ENCODE measurements at regions of chr4 and their contacts with region 1.

Region 1: DNA sequence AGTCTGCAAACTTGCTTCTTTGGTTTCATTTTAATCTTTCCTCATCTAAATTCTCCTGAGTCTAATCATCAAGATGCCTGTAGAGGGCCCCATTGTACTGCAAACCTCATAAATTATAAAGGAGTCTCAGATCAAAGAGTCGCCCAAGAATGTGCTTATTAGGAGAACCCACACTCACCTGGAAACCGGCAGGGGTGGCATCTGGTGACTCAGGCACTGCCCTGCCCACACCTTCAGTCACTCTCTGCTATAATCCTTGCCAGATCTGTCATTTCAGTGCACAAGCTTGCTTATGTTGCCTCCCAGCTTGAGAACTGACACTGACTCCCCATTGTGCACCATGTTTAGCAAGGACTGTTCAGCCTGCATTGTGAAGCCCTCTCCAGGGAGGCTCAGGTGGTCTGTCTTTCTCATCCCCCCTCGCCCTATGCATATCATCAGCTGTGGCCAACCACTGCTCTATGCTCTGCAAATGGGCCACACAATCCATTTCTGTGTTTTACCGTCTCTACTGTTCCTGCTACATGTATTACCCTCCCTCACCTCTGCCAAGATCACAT is 12.4 kb downstream of the EPGN start:
- DNase-seq: peak; percentile 90
- H3K4me3 ChIP-seq: no peak overlapping the region
- H3K27ac ChIP-seq: peak overlapping the region; percentile 20
- H3K4me1 ChIP-seq: peaks cover 15% of the 10 kb centered on the region
- H3K27me3 ChIP-seq: no peaks in the 10 kb centered on the region
- CTCF ChIP-seq: peak; percentile 50 to 66

Region 2: GRCh38 chr4:74364652-74365491 is 44.2 kb after region 1 on chr4 and contains the start of gene EREG:
- CTCF ChIA-PET with region 1: no interaction called
- dilution Hi-C with region 1: no loop called
- in situ Hi-C with region 1: no loop called
- intact Hi-C with region 1: loop called (anchors 1 kb)
- DNase-seq: peak; percentile 51
- H3K4me3 ChIP-seq: peak within 1 kb of the TSS; percentile 65 to 91 (median 81)
- H3K27ac ChIP-seq: peak within 1 kb of the TSS; percentile 83
- H3K4me1 ChIP-seq: peaks cover 10% of the 10 kb centered on the region
- H3K27me3 ChIP-seq: no peaks in the 10 kb centered on the region
- CTCF ChIP-seq: no peak
- total RNA-seq, gene EREG: 9.5 to 44.0 TPM

Region 3: DNA sequence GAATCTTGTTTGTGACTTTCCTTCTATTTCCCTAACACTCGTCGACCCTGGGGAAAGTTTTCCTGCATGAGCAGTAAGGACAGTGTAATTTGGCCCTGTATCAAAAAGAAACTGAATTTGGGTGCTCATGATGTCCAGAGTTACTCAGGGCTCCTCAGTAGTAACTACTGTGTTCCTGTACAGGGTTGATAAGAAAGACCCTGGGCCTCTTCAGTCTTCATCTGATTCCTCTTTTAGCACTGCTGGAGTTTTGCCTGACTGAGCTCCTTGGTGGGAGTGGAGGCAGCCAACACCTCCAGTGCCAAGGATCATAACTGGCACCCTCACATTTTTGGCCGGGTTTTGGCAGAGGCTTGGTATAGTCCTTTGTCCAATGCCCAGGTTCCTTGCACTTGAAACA is 117.2 kb after region 1 on chr4:
- CTCF ChIA-PET with region 1: no interaction called
- dilution Hi-C with region 1: no loop called
- in situ Hi-C with region 1: no loop called
- intact Hi-C with region 1: loop called (anchors 2 kb)
- DNase-seq: no peak
- H3K4me3 ChIP-seq: no peak overlapping the region
- H3K27ac ChIP-seq: no peak overlapping the region
- H3K4me1 ChIP-seq: peaks cover 34% of the 10 kb centered on the region
- H3K27me3 ChIP-seq: no peaks in the 10 kb centered on the region
- CTCF ChIP-seq: no peak

Region 4: DNA sequence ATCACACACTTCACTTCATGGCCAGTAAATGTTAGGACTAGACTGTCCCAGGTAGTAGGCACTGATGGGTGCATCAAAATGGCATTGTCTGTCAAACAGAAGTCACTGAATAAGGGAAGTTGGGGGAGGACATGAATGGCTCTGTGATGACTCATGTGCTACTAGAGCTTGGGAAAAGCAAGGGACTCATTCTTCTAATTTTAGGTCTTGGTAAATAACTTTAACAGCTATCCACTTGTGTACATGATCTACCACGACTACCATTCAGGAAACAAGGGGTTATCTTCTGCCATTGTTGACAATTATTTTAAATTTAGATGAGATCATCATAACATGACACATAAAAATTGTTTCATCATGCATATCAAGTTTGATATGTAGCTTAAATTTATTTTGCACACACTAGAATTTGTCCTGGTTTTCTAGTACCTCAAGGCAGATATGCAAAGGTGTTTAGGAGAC is 130.6 kb after region 1 on chr4:
- CTCF ChIA-PET with region 1: no interaction called
- dilution Hi-C with region 1: no loop called
- in situ Hi-C with region 1: no loop called
- intact Hi-C with region 1: loop called (anchors 2 kb)
- DNase-seq: peak; percentile 63
- H3K4me3 ChIP-seq: peak overlapping the region; percentile 83 to 93 (median 93)
- H3K27ac ChIP-seq: peak overlapping the region; percentile 99
- H3K4me1 ChIP-seq: peaks cover 11% of the 10 kb centered on the region
- H3K27me3 ChIP-seq: no peaks in the 10 kb centered on the region
- CTCF ChIP-seq: no peak

Region 5: GRCh38 chr4:74874753-74875367 is 554.2 kb after region 1 on chr4:
- CTCF ChIA-PET with region 1: no interaction called
- dilution Hi-C with region 1: no loop called
- in situ Hi-C with region 1: no loop called
- intact Hi-C with region 1: loop called (anchors 10 kb)
- DNase-seq: peak; percentile 66
- H3K4me3 ChIP-seq: no peak overlapping the region
- H3K27ac ChIP-seq: no peak overlapping the region
- H3K4me1 ChIP-seq: no peaks in the 10 kb centered on the region
- H3K27me3 ChIP-seq: peaks cover 4% of the 10 kb centered on the region
- CTCF ChIP-seq: peak; percentile 92 to 95

Measured in mammary epithelial cell (primary cell).